IMR-90 (cell line): ENCODE measurements at regions of chr5 and their contacts with region 1.

Region 1: GRCh38 chr5:78269088-78269703 is 25.3 kb downstream of the AP3B1 start:
- DNase-seq: peak; percentile 12
- ATAC-seq: peak; percentile 59; the same call in 1 of the 2 replicates
- H3K4me3 ChIP-seq: no peak overlapping the region
- H3K27ac ChIP-seq: no peak overlapping the region
- H3K4me1 ChIP-seq: peaks cover 3% of the 10 kb centered on the region; the same call in 1 of the 2 replicates
- H3K27me3 ChIP-seq: no peaks in the 10 kb centered on the region
- CTCF ChIP-seq: peak; percentile 48
- POLR2A ChIP-seq: no peak
- RAD21 ChIP-seq: peak; percentile 37

Region 2: GRCh38 chr5:77560677-77561263 is 708.4 kb before region 1 on chr5:
- CTCF ChIA-PET with region 1: no interaction called
- POLR2A ChIA-PET with region 1: no interaction called
- dilution Hi-C with region 1: no loop called
- in situ Hi-C with region 1: loop called (anchors 25 kb)
- intact Hi-C with region 1: loop called (anchors 10 kb)
- DNase-seq: peak; percentile 55
- ATAC-seq: peak; percentile 63
- H3K4me3 ChIP-seq: no peak overlapping the region
- H3K27ac ChIP-seq: no peak overlapping the region
- H3K4me1 ChIP-seq: no peaks in the 10 kb centered on the region
- H3K27me3 ChIP-seq: peaks cover 13% of the 10 kb centered on the region
- CTCF ChIP-seq: peak; percentile 65
- POLR2A ChIP-seq: no peak
- RAD21 ChIP-seq: peak; percentile 71

Region 3: DNA sequence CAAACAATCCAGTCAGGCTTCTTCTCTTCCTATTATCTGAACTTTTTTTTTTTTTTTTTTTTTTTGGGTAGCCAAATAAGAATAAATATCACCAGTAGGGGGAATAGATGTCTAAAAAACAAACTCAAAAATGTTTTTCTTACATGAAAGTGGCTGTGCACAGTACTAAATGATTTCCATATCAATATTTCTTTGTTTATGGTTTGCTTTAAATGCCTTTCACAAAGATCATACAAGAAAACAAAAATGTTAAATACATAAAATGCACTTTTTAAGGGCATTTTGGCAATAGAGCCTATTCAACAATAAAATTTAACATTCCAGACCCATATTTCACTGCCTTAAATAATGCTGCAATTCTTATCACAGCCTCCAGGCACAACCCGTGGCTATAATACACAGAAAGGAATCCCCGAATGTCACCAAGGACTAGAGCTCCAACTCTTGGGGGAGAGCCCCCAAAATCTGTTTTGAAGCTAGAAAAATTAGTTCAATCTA is 402.0 kb before region 1 on chr5:
- CTCF ChIA-PET with region 1: no interaction called
- POLR2A ChIA-PET with region 1: no interaction called
- dilution Hi-C with region 1: no loop called
- in situ Hi-C with region 1: loop called (anchors 10 kb)
- intact Hi-C with region 1: loop called (anchors 10 kb)
- DNase-seq: peak; percentile 32
- ATAC-seq: peak; percentile 82
- H3K4me3 ChIP-seq: no peak overlapping the region
- H3K27ac ChIP-seq: no peak overlapping the region
- H3K4me1 ChIP-seq: no peaks in the 10 kb centered on the region
- H3K27me3 ChIP-seq: peaks cover 19% of the 10 kb centered on the region
- CTCF ChIP-seq: peak; percentile 40
- POLR2A ChIP-seq: no peak
- RAD21 ChIP-seq: peak; percentile 27; the same call in 1 of the 2 replicates

Region 4: DNA sequence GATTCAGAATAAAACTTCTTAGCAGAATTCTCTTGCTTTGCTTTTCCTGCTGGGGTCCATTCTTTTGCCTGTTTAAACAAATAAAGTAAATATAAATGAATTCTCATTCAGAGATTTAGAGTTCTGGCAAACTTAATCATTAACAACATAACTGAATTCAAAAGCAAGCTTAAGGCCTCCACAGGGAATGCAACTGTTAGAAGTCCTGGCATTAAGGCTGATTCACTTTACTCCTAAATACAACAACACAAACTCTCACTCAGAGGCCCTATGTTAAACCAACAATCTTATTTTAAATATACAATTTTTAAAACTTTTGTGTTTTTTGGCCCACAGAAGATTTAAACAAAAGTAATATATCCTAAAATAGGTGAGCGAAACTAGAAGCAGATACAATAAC is 153.0 kb before region 1 on chr5:
- CTCF ChIA-PET with region 1: no interaction called
- POLR2A ChIA-PET with region 1: no interaction called
- dilution Hi-C with region 1: no loop called
- in situ Hi-C with region 1: no loop called
- intact Hi-C with region 1: loop called (anchors 5 kb)
- DNase-seq: no peak
- ATAC-seq: peak; percentile 62
- H3K4me3 ChIP-seq: no peak overlapping the region
- H3K27ac ChIP-seq: no peak overlapping the region
- H3K4me1 ChIP-seq: 0 out of 2 replicates have a peak, but pooled peaks cover 2% of the 10 kb centered on the region
- H3K27me3 ChIP-seq: no peaks in the 10 kb centered on the region
- CTCF ChIP-seq: no peak
- POLR2A ChIP-seq: no peak
- RAD21 ChIP-seq: no peak

Region 5: DNA sequence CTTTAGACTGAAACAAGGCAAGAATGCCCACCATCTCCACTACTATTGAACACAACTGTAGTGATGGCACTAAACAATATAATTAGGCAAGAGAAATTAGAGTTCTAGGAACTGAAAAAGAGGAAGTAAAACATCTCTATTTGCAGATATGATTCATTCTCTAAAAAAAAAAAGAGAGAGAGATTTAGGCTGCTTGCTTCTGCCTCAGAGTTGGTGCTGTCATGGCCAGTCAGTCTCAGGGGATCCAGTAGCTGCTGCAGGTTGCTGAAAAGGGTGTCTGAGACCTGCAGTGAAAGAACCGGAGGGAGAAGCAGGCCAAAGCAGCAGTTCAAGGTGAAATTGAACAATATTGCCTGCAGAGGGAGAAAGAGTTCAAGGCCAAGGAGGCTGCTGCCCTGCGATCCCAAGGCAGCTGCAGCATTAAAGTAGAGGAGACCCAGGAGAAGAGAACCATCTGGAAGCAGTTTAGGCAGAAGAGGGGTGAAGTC is 47.2 kb before region 1 on chr5:
- CTCF ChIA-PET with region 1: interaction called, 3 read pairs
- POLR2A ChIA-PET with region 1: no interaction called
- dilution Hi-C with region 1: no loop called
- in situ Hi-C with region 1: no loop called
- intact Hi-C with region 1: loop called (anchors 1 kb)
- DNase-seq: peak; percentile 4
- ATAC-seq: no peak; the same call in 1 of the 2 replicates
- H3K4me3 ChIP-seq: no peak overlapping the region
- H3K27ac ChIP-seq: no peak overlapping the region
- H3K4me1 ChIP-seq: no peaks in the 10 kb centered on the region
- H3K27me3 ChIP-seq: no peaks in the 10 kb centered on the region
- CTCF ChIP-seq: no peak
- POLR2A ChIP-seq: no peak
- RAD21 ChIP-seq: no peak